ENCODE measurements at regions of chr1 and their contacts with region 1.

Region 1: DNA sequence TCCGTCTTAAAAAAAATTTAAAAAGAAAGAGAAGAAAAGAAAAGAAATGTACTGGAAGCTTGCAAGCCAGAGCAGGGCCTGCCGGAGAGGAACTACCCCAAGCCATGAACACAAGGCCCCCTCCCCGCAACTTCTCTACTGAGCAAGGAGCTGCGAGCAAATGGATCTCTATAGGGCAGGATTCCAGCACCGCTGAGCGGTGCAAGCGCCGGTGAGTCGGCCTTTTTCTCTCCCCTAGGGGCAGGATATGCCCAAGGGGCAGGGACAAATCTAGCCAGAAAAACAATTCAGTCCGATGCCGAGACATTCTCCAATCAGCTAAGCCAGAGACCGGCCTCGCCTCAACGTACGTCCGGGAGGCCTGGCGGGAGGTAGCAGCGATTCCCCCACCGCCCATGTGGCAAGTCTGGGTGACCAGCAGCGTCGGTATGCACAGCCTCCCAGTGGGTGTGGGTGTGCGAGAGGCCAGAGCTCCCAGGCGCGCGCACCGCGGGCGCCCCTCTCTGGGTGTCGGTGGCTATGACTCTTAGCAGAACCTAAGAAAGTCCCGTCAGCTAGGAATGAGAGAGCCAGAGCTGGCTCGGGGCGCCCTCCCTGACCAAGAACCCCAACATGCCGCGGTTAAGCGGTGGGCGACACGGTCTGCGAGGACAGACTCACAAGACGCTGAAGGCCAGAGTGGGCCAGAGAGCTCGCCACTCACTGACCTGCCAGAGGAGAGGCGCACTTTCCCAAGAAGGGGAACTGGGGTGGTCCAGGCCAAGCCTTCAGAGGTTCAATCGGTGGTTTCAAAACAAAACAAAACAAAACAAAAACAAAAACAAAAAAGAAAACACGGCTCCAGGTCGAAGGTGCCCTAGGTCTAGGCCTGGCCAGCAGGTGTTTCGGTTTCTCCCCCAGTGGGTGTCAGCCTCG is 1.9 kb downstream of the CSMD2 start:
- DNase-seq: peak; percentile 32
- ATAC-seq: peak; percentile 98
- H3K4me3 ChIP-seq: no peak overlapping the region
- H3K27ac ChIP-seq: no peak overlapping the region
- H3K4me1 ChIP-seq: no peaks in the 10 kb centered on the region
- H3K27me3 ChIP-seq: peaks cover 3 to 44% of the 10 kb centered on the region in 2 experiments; a peak in 3 of 5 replicates
- CTCF ChIP-seq: peak; percentile 64
- EP300 ChIP-seq: no peak
- POLR2A ChIP-seq: no peak
- RAD21 ChIP-seq: peak; percentile 63

Region 2: GRCh38 chr1:33633019-33633801 is 529.9 kb before region 1 on chr1:
- CTCF ChIA-PET with region 1: interaction called, 12 read pairs
- POLR2A ChIA-PET with region 1: no interaction called
- in situ Hi-C with region 1: loop called (anchors 25 kb)
- intact Hi-C with region 1: no loop called
- DNase-seq: peak; percentile 76
- ATAC-seq: peak; percentile 96
- H3K4me3 ChIP-seq: peak overlapping the region in 1 of 3 experiments; percentile 48; a peak in 1 of 6 replicates
- H3K27ac ChIP-seq: no peak overlapping the region
- H3K4me1 ChIP-seq: no peaks in the 10 kb centered on the region
- H3K27me3 ChIP-seq: peaks cover 8 to 53% of the 10 kb centered on the region in 2 experiments
- CTCF ChIP-seq: peak; percentile 94
- EP300 ChIP-seq: no peak
- POLR2A ChIP-seq: no peak
- RAD21 ChIP-seq: peak; percentile 65

Region 3: GRCh38 chr1:34073028-34073695 is 89.9 kb before region 1 on chr1:
- CTCF ChIA-PET with region 1: no interaction called
- POLR2A ChIA-PET with region 1: no interaction called
- in situ Hi-C with region 1: no loop called
- intact Hi-C with region 1: no loop called
- DNase-seq: no peak
- ATAC-seq: no peak
- H3K4me3 ChIP-seq: no peak overlapping the region
- H3K27ac ChIP-seq: no peak overlapping the region
- H3K4me1 ChIP-seq: no peaks in the 10 kb centered on the region
- H3K27me3 ChIP-seq: no peaks in the 10 kb centered on the region
- CTCF ChIP-seq: no peak
- EP300 ChIP-seq: no peak
- POLR2A ChIP-seq: no peak
- RAD21 ChIP-seq: no peak

Region 4: DNA sequence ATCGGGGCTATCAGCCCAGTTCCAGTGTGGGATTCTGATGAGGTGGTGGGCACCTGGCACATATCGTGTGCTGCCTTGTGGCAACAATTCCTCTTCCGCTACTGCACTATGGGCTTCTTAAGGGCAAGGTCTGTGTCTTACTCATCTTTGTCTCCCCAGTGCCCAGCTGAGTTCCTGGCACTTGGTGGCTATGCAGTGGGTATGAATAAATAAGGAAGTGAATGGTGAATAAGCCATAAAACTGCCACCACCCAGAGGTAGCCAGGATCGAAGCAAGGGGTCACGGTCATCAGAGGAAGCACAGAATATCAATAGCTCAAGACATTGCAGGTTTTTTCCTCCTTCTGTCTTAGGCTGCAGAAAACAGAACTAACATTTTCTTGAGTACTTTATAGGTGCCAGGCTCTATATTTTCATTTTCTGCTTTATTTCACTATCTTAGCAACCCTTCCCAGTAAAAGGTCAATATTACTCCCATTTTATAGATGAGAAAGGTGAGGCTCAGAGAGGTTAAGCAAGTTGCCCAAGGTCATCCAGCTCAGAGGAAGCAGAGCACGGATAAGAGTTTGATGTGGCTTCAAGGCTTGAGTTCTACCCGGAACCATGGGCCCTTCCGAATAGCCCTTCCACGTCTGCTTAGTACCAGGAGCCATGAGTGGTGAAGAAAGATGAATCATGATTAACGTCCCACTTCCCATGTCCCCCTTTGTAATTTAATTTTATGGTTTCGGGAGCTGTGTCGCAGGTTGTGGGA is 23.8 kb after region 1 on chr1:
- CTCF ChIA-PET with region 1: no interaction called
- POLR2A ChIA-PET with region 1: no interaction called
- in situ Hi-C with region 1: no loop called
- intact Hi-C with region 1: no loop called
- DNase-seq: no peak
- ATAC-seq: no peak
- H3K4me3 ChIP-seq: no peak overlapping the region
- H3K27ac ChIP-seq: no peak overlapping the region
- H3K4me1 ChIP-seq: no peaks in the 10 kb centered on the region
- H3K27me3 ChIP-seq: no peaks in the 10 kb centered on the region; a peak in 1 of 5 replicates
- CTCF ChIP-seq: no peak
- EP300 ChIP-seq: no peak
- POLR2A ChIP-seq: no peak
- RAD21 ChIP-seq: no peak

Measured in HepG2 (cell line).